CD4-positive, alpha-beta memory T cell (primary cell): ENCODE measurements at regions of chr4 and their contacts with region 1.

Region 1: GRCh38 chr4:89316931-89317366 is 9.3 kb upstream of the GPRIN3 start:
- DNase-seq: peak in 4 of 5 donors; percentile 39 to 74 (median 42)
- H3K4me3 ChIP-seq: peak overlapping the region; percentile 8 to 18
- H3K4me3 Mint-ChIP-seq: peak overlapping the region; percentile 43 to 80 (median 72)
- H3K27ac ChIP-seq: peak overlapping the region; percentile 55
- H3K27ac Mint-ChIP-seq: peak overlapping the region; percentile 87 to 95 (median 93)
- H3K4me1 ChIP-seq: peaks cover 34% of the 10 kb centered on the region
- H3K4me1 Mint-ChIP-seq: peaks cover 27 to 48% (median 35%) of the 10 kb centered on the region in 4 donors
- H3K27me3 ChIP-seq: no peaks in the 10 kb centered on the region
- H3K27me3 Mint-ChIP-seq: no peaks in the 10 kb centered on the region

Region 2: DNA sequence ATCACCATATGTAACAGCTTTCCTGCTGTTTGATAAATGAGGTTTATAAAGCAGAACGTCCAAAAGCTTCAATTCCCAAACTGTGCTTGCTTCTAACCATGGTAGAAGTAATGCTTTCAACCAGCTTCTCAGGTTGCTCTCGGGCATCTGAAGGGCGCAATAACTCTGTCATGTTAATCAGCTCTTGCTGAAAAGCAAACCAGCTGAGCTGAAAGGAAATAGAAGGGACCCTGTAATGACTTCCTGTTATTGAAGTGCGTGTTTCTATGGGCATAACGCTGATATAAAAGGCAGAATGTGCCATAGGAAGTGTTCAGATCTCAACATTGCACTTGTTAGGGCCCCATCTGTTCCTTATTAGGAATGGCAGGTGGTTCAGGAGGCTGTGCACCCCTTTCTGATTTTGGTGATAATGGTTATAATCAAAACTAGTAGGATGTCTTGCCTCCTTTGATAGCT is 703.5 kb before region 1 on chr4:
- CTCF ChIA-PET with region 1: no interaction called
- POLR2A ChIA-PET with region 1: no interaction called
- intact Hi-C with region 1: no loop called
- DNase-seq: peak; percentile 76 to 87 (median 84)
- H3K4me3 ChIP-seq: peak overlapping the region in 1 of 2 donors; percentile 43
- H3K4me3 Mint-ChIP-seq: peak overlapping the region; percentile 69 to 88 (median 79)
- H3K27ac ChIP-seq: peak overlapping the region; percentile 62
- H3K27ac Mint-ChIP-seq: peak overlapping the region; percentile 93 to 99 (median 97)
- H3K4me1 ChIP-seq: peaks cover 67% of the 10 kb centered on the region
- H3K4me1 Mint-ChIP-seq: peaks cover 65 to 91% (median 77%) of the 10 kb centered on the region in 4 donors
- H3K27me3 ChIP-seq: no peaks in the 10 kb centered on the region
- H3K27me3 Mint-ChIP-seq: no peaks in the 10 kb centered on the region

Region 3: DNA sequence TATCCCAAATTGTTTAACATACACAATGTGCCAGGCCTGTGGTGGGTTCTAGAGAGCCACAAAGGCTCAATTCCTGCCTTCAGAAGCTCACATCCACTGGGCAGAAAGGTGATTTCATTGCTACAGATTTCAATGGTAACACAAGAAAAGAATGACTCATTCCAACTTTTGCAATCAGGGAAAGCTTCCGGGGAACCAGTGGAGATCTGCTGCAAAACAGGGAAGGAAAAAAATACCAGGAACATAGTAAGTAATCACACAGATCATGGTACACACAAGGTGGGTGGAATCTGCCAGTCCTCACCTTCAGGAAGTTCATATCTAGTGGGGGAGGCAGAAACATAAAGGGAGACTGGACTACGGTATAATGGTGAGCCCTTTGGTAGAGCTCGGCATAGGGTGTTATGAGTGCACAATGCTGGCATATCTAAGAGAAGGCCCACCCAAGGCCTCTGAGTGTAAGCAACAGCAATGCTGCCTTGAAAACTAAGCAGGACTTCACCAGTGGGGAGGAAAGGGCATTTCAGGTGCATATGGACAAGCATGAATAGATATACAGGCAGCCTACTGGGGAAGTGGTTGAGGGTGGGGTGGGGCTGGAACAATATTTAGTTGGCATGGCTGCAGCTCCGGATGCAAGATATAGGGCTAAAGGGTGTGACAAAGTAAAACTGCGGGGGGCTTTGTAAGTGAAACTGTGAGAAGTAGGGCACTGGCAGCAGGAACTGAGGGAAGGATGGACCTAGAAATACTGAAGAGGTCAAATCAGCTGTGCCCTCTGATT is 33.5 kb before region 1 on chr4:
- CTCF ChIA-PET with region 1: interaction called, 5 read pairs
- POLR2A ChIA-PET with region 1: interaction called, 27 read pairs
- intact Hi-C with region 1: no loop called
- DNase-seq: peak; percentile 83 to 89 (median 88)
- H3K4me3 ChIP-seq: peak overlapping the region; percentile 9 to 26
- H3K4me3 Mint-ChIP-seq: peak overlapping the region; percentile 83 to 91 (median 86)
- H3K27ac ChIP-seq: peak overlapping the region; percentile 86
- H3K27ac Mint-ChIP-seq: peak overlapping the region in 3 of 7 donors; percentile 99 to 100 (median 99)
- H3K4me1 ChIP-seq: peaks cover 97% of the 10 kb centered on the region
- H3K4me1 Mint-ChIP-seq: peaks cover 32 to 68% (median 47%) of the 10 kb centered on the region in 4 donors
- H3K27me3 ChIP-seq: no peaks in the 10 kb centered on the region
- H3K27me3 Mint-ChIP-seq: no peaks in the 10 kb centered on the region

Region 4: GRCh38 chr4:89334311-89334710 is 17.4 kb after region 1 on chr4:
- CTCF ChIA-PET with region 1: no interaction called
- POLR2A ChIA-PET with region 1: no interaction called
- intact Hi-C with region 1: loop called (anchors 2 kb)
- DNase-seq: no peak
- H3K4me3 ChIP-seq: no peak overlapping the region
- H3K4me3 Mint-ChIP-seq: no peak overlapping the region
- H3K27ac ChIP-seq: no peak overlapping the region
- H3K27ac Mint-ChIP-seq: no peak overlapping the region
- H3K4me1 ChIP-seq: peaks cover 24% of the 10 kb centered on the region
- H3K4me1 Mint-ChIP-seq: peaks cover 0 to 14% (median 11%) of the 10 kb centered on the region in 4 donors
- H3K27me3 ChIP-seq: no peaks in the 10 kb centered on the region
- H3K27me3 Mint-ChIP-seq: no peaks in the 10 kb centered on the region

Region 5: DNA sequence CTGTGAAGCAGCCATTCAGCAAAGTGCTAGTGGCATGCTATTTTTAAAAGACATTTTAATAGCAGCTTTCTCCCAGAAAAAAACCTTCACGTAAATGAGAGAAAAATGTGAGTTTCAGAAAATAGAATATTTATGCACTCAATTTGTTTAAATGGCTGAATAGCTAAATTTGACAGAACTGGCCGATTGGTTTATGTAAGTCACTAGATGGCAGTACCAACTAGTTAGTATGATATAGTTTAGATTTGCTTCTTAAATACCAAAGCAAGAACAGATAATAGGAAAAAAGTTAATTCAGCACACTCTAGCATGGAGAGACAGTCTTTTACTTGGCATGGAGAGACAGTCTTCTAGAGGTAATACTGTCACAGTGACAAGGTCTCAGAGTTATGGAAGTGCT is 269.9 kb after region 1 on chr4:
- CTCF ChIA-PET with region 1: no interaction called
- POLR2A ChIA-PET with region 1: no interaction called
- intact Hi-C with region 1: no loop called
- DNase-seq: peak in 1 of 5 donors; percentile 0
- H3K4me3 ChIP-seq: no peak overlapping the region
- H3K4me3 Mint-ChIP-seq: no peak overlapping the region
- H3K27ac ChIP-seq: no peak overlapping the region
- H3K27ac Mint-ChIP-seq: no peak overlapping the region
- H3K4me1 ChIP-seq: no peaks in the 10 kb centered on the region
- H3K4me1 Mint-ChIP-seq: no peaks in the 10 kb centered on the region
- H3K27me3 ChIP-seq: peaks cover 5% of the 10 kb centered on the region
- H3K27me3 Mint-ChIP-seq: peaks cover 4 to 7% of the 10 kb centered on the region in 2 donors